ENCODE measurements at regions of chr15 and their contacts with region 1.

Region 1: DNA sequence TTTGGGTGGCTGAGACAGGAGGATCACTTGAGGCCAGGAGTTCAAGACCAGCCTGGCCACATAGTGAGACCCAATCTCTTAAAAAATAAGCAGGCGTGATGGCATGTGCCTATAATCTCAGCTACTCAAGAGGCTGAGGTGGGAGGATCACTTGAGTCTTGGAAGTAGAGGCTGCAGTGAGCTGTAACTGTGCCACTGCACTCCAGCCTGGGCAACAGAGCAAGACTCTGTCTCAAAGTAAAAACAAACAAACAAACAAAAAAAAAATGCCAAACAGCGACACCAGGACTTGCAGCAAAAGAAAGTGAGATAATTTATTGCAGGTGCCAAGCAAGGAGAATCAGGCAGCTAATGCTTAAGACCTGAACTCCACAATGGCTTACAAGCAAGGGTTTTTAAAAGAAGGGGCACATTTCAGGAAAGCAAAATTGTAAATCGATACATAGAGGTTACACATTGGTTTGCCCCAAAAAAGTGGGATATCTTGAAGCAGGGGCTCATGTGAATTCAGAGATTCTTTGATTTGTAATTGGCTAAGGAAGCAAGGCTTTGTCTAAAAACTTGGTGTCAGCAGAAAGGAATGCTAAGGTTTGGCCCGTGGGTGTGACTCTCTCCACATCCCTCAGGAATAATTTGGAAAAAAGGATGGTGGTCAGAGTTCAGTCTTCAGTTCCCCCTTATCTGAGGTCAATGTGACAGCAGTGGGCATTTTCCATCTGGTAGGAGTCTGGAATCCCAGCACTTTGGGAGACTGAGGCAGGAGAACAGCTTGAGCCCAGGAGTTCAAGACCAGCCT is 5.2 kb upstream of the MPI start:
- DNase-seq: no peak
- H3K4me3 Mint-ChIP-seq: no peak overlapping the region
- H3K27ac Mint-ChIP-seq: no peak overlapping the region
- H3K4me1 Mint-ChIP-seq: peaks cover 25% of the 10 kb centered on the region
- H3K27me3 Mint-ChIP-seq: no peaks in the 10 kb centered on the region
- CTCF ChIP-seq: no peak

Region 2: DNA sequence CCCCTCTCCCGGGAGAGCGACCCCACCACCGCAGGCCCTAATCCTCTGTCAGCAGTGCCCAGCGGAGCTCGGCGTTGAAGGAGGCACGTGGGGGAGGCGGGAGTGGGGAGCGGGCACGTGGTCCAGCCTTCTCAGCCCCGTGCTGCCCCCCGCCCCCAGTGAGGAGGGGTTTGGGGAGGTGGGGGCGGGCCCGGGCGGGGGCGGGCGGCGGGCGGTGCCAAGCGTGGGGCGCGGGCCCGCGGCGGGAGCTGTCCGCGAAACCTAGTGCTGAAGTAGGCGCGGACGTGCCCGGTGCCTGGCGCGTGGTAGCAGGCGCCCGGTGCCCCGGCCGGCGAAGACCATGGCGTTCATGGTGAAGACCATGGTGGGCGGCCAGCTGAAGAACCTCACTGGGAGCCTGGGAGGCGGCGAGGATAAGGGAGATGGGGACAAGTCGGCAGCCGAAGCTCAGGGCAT is 58.2 kb before region 1 on chr15 and contains the start of gene CPLX3:
- CTCF ChIA-PET with region 1: no interaction called
- intact Hi-C with region 1: no loop called
- DNase-seq: peak; percentile 50
- H3K4me3 Mint-ChIP-seq: no peak within 1 kb of the TSS
- H3K27ac Mint-ChIP-seq: no peak within 1 kb of the TSS
- H3K4me1 Mint-ChIP-seq: no peaks in the 10 kb centered on the region
- H3K27me3 Mint-ChIP-seq: peaks cover 83% of the 10 kb centered on the region
- CTCF ChIP-seq: no peak
- total RNA-seq, gene CPLX3: 0.21 and 0.29 TPM in 2 replicates

Region 3: DNA sequence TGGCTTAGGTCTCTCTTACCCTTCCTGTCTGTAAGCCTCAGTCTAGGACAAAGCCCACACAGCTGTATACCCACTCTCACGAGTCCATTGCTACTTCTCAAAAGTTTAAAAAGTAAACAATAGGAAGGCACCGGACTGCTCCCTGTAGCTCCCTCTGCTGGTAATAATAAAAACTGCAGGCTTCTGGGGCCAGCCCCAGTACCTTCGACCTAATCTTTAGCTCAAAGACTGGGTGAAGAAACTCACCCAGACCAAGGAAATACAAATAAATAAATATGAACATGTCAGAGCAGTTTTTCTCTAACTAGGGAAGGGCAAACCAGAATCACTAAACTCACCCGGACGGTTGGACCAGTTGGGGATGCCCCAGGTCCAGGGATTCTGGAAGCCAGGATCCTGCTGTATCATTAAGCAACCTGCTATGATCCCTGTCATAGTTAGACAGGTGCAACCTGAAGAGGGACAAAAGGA is 17.0 kb after region 1 on chr15:
- CTCF ChIA-PET with region 1: interaction called, 18 read pairs
- intact Hi-C with region 1: no loop called
- DNase-seq: peak; percentile 81
- H3K4me3 Mint-ChIP-seq: no peak overlapping the region
- H3K27ac Mint-ChIP-seq: no peak overlapping the region
- H3K4me1 Mint-ChIP-seq: peaks cover 13% of the 10 kb centered on the region
- H3K27me3 Mint-ChIP-seq: no peaks in the 10 kb centered on the region
- CTCF ChIP-seq: peak; percentile 93

Measured in Calu3 (cell line).